Natural killer cell (primary cell): ENCODE measurements at regions of chr14 and their contacts with region 1.

Region 1: DNA sequence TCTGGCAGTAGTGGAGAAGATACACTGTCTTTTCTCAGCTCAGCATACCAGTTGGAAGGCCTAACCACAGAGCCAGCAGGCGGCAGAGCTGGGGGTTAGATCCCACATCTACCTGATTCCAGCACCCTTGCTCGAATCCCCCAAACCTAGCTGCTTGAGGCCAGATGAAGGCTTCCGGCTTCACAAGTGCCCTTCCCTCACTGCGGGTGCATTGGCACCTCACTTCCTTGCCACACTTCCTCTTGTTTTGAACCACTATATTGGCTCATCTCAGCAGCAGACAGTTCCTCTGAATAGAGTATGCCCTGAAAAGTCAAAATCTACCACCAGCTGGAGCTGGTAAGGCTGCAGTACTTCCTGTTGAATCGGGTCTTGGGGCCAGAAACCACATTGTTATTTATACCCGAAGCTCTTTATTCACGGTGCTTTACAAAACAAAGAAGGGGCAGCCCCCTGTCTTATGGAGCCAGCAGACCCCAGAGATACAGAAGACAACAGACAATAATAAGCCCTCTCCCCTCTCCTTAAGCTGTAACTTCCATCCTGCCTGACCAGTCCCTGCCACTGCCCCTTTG is 233.7 kb downstream of the EFCAB11 start:
- DNase-seq: peak; percentile 66 to 93
- ATAC-seq: peak; percentile 74 to 93 (median 88)
- H3K4me3 ChIP-seq: no peak overlapping the region
- H3K4me3 Mint-ChIP-seq: peak overlapping the region; percentile 72
- H3K27ac ChIP-seq: peak overlapping the region; percentile 93
- H3K27ac Mint-ChIP-seq: peak overlapping the region; percentile 88 to 92
- H3K4me1 ChIP-seq: peaks cover 81% of the 10 kb centered on the region
- H3K4me1 Mint-ChIP-seq: peaks cover 75 to 83% of the 10 kb centered on the region in 2 donors
- H3K27me3 ChIP-seq: no peaks in the 10 kb centered on the region
- H3K27me3 Mint-ChIP-seq: no peaks in the 10 kb centered on the region
- CTCF ChIP-seq: no peak

Region 2: DNA sequence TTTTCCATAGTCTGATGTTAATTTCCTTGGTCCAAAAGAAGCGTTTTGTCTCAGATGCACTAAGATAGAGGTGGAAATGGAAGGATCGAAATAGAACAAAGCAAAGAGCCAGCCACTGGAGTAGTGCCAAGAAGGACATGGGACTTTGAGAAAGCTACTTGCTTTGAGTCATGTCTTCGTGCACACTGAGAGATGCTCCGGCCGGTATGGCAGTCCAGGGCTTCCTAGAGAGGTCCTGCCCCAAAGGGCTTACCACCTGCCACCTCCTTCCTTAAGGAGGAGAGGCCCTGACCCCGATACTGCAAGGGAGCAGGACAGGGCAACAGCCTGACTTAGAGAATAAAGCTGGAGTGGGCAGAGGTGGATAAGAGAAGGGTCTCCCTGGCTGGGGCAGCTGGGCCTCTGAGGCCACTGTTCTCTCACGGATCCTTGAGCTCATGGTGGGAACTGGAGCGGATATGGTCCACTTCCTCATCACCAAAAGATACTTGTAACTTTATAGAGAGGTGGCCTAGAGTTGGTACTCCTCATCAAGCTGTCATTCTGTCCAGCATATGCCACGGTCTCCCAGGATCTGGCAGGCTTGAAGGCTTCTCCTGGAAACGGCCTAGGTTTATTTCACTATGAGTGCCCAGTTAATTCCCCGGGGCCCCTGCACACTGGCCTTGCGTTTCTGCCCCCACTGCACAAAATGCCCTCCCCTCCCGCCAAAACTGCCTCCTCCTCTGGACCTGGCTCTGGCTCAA is 361.2 kb before region 1 on chr14:
- intact Hi-C with region 1: loop called (anchors 5 kb)
- DNase-seq: no peak
- ATAC-seq: no peak
- H3K4me3 ChIP-seq: no peak overlapping the region
- H3K4me3 Mint-ChIP-seq: peak overlapping the region; percentile 67
- H3K27ac ChIP-seq: no peak overlapping the region
- H3K27ac Mint-ChIP-seq: peak overlapping the region; percentile 67 to 85
- H3K4me1 ChIP-seq: peaks cover 25% of the 10 kb centered on the region
- H3K4me1 Mint-ChIP-seq: peaks cover 37 to 58% of the 10 kb centered on the region in 2 donors
- H3K27me3 ChIP-seq: no peaks in the 10 kb centered on the region
- H3K27me3 Mint-ChIP-seq: no peaks in the 10 kb centered on the region
- CTCF ChIP-seq: no peak

Region 3: DNA sequence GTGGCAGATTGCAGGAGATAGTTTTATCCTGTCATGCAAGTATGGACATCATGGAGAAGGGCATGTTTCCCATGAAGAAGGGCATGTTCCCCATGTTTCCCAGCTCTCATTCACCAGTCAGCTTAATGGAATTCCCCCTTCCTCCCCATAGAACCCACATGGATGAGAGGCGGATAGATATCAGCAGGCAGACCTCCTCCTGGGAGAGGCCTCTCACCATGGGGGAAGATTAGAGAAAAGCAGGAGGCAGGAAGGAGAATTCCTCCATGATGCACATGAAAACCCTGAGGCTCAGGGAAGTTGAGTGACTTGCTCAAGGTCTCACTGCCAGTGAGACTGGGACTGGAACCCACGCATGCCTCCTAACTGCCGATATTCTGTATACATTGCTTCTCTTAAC is 210.9 kb before region 1 on chr14:
- intact Hi-C with region 1: loop called (anchors 5 kb)
- DNase-seq: no peak
- ATAC-seq: no peak
- H3K4me3 ChIP-seq: no peak overlapping the region
- H3K4me3 Mint-ChIP-seq: peak overlapping the region; percentile 76
- H3K27ac ChIP-seq: peak overlapping the region; percentile 49
- H3K27ac Mint-ChIP-seq: peak overlapping the region; percentile 97
- H3K4me1 ChIP-seq: peaks cover 38% of the 10 kb centered on the region
- H3K4me1 Mint-ChIP-seq: peaks cover 61 to 65% of the 10 kb centered on the region in 2 donors
- H3K27me3 ChIP-seq: no peaks in the 10 kb centered on the region
- H3K27me3 Mint-ChIP-seq: no peaks in the 10 kb centered on the region
- CTCF ChIP-seq: no peak

Region 4: GRCh38 chr14:89625244-89625713 is 95.5 kb before region 1 on chr14:
- intact Hi-C with region 1: loop called (anchors 1 kb)
- DNase-seq: no peak
- ATAC-seq: no peak
- H3K4me3 ChIP-seq: no peak overlapping the region
- H3K4me3 Mint-ChIP-seq: peak overlapping the region; percentile 40
- H3K27ac ChIP-seq: peak overlapping the region; percentile 85
- H3K27ac Mint-ChIP-seq: peak overlapping the region; percentile 90 to 95
- H3K4me1 ChIP-seq: peaks cover 33% of the 10 kb centered on the region
- H3K4me1 Mint-ChIP-seq: peaks cover 52 to 56% of the 10 kb centered on the region in 2 donors
- H3K27me3 ChIP-seq: no peaks in the 10 kb centered on the region
- H3K27me3 Mint-ChIP-seq: no peaks in the 10 kb centered on the region
- CTCF ChIP-seq: no peak

Region 5: DNA sequence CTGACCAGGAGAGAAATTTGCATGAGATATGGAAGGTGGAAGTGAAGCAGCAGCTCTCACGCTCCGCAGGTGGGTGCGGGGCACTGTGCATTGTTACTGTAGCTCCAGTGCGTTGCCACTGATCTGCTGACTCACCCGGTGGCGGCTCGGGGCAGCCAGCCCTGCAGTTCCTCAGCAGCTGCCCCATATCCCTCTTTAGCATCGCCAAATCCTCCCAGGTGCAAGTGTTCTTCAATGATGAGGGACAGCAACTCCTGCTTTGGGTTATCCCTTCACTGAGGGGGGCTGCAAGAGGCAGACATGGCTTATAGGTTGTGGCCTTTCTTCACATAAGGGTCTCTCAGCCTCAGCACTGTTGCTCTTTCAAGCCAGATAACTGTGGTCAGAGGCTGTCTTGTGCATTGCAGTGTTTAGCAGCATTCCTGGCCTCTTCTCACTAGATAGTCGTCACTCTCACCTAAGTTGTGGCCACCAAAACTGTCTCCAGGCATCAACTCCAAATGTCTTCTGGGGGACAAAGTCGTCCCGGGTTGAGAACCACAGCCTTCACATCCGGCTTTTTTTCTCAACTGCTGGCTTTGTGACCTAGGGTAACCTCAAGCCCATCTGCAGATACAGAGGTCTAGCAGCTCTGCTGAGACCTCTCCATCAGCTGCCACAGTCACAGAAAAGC is 53.0 kb after region 1 on chr14:
- intact Hi-C with region 1: loop called (anchors 1 kb)
- DNase-seq: peak; percentile 59 to 82
- ATAC-seq: peak; percentile 83 to 93 (median 89)
- H3K4me3 ChIP-seq: no peak overlapping the region
- H3K4me3 Mint-ChIP-seq: peak overlapping the region; percentile 74
- H3K27ac ChIP-seq: peak overlapping the region; percentile 28
- H3K27ac Mint-ChIP-seq: peak overlapping the region; percentile 76 to 83
- H3K4me1 ChIP-seq: peaks cover 27% of the 10 kb centered on the region
- H3K4me1 Mint-ChIP-seq: peaks cover 16 to 17% of the 10 kb centered on the region in 2 donors
- H3K27me3 ChIP-seq: no peaks in the 10 kb centered on the region
- H3K27me3 Mint-ChIP-seq: peaks cover 0 to 7% of the 10 kb centered on the region in 2 donors
- CTCF ChIP-seq: no peak